Gastrocnemius medialis (tissue), 4 donors: ENCODE measurements at regions of chr14 and their contacts with region 1.

Region 1: DNA sequence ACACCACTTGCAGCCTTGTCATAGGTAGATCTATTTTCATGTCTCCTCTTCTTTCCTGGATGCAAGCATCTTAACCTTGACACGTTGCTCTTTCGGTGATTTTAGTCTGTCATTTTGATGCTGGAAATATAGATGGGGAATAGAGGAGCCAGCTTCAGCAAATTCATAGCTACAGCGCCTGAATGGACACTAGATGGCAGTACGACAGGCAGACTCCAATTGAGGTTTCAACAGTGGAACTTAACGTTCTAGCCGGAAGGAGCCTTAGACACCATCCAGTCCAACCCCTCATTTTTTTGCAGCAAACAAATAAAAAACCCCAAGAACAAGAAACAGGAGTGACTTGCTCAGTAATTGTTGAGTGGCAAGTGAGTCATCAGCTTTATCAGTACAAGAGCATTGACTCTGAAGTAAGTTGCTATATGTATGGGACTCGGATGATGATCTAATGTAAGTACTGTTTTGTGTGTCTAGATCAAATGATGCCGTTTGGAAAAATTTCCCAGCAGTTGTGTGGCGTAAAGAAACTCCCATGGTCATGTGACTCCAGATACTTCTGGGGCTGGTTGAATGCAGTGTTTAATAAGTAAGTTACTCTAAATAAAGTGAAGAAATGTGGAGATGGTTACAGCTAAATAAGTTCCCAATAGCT is 9.0 kb downstream of the DMAC2L start:
- DNase-seq: peak; percentile 44 to 51
- ATAC-seq: peak; percentile 96 to 99
- H3K4me3 ChIP-seq: peak overlapping the region; percentile 15 to 40 (median 28)
- H3K27ac ChIP-seq: peak overlapping the region; percentile 52 to 72 (median 63)
- H3K4me1 ChIP-seq: peaks cover 16 to 23% of the 10 kb centered on the region in 2 donors
- H3K27me3 ChIP-seq: no peaks in the 10 kb centered on the region
- CTCF ChIP-seq: peak; percentile 52 to 89 (median 77)
- POLR2A ChIP-seq: no peak

Region 2: DNA sequence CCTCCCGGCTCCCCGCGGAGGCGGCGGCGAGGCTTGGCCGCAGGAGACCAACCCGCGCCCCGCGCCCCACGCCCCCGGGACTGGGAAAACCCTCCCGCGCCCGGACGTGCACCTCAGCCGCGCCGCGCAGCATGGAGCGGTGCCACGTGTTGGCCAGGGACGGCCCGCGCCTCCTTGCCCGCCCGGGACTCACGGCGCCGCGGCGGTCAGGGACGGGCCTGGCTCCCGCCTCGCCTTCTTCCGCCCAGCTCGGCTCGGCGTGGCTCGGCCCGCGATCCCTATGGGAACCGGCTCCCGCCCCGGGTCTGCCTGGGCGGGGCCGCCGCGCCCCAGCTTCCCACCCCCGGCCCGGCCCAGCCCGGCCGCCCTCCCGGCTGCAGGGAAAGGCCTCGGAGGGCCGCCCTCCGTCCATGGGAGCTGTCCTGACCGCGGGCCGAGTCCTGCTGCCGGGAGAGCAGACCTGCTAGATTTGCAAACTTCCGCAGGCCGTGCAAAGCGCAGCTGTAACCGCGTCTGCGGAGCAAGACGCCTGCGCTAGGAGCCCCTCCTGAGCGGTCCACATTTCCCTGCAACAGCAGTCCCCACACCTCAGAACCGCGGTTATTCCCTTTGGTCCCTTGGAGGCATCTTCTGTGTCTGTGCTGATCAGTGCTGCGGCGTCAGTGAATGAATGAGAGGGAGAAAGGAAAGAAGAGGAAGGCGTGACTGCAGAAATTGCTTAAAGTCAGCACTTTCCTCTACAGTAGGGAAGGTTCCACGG is 75.7 kb after region 1 on chr14 and contains the start of gene CDKL1:
- in situ Hi-C with region 1: loop called in 1 of 4 experiments (anchors 5 kb)
- intact Hi-C with region 1: loop called (anchors 2 kb)
- DNase-seq: peak; percentile 9 to 27
- ATAC-seq: peak; percentile 74 to 75
- H3K4me3 ChIP-seq: peak within 1 kb of the TSS; percentile 59 to 95 (median 67)
- H3K27ac ChIP-seq: peak within 1 kb of the TSS; percentile 66 to 70 (median 68)
- H3K4me1 ChIP-seq: peaks cover 10 to 13% of the 10 kb centered on the region in 2 donors
- H3K27me3 ChIP-seq: no peaks in the 10 kb centered on the region
- CTCF ChIP-seq: no peak
- POLR2A ChIP-seq: peak in 1 of 2 donors; percentile 13
- total RNA-seq, gene CDKL1: 0.59 to 2.0 (median 1.4) TPM

Region 3: DNA sequence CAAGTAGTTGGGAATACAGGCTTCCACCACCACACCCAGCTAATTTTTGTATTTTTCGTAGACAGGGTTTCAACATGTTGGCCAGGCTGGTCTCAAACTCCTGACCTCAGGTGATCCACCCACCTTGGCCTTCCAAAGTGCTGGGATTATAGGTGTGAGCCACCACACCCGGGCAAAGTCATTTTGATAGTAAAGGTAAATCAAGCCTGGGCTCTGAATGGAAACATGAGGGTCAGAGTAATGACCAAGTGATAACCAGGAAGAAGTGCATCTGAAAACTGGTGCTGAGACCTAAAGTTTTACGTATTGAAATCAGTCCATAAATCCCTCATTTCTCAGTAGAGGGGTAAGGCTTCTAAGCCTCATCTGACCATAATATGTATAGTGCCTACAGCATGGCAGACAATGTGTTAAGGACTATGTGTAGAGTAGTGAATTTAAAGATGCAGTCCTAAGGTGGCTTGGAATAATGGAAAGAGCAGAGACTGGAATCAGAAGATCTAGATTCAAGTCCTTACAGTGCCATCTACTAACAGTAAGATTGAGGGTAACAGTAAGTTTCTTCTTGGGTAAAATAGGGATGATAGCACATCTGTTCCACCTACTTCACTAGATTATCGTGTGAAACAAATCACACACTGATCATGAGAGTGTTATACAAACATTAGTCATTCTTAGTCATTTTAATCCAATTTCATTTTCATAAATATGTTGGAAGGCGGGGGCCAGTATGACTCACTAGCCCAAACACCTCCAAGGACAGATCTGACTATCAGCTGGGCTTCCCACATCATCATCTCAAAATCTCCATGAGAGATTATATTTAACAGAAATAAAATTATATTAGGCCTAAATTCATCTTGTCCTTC is 200.0 kb after region 1 on chr14:
- in situ Hi-C with region 1: loop called in 2 of 4 experiments (anchors 5 to 10 kb)
- intact Hi-C with region 1: no loop called
- DNase-seq: no peak
- ATAC-seq: peak in 1 of 2 donors; percentile 66
- H3K4me3 ChIP-seq: no peak overlapping the region
- H3K27ac ChIP-seq: peak overlapping the region in 2 of 4 donors; percentile 33 to 36
- H3K4me1 ChIP-seq: peaks cover 0 to 4% of the 10 kb centered on the region in 2 donors
- H3K27me3 ChIP-seq: no peaks in the 10 kb centered on the region
- CTCF ChIP-seq: no peak
- POLR2A ChIP-seq: no peak

Region 4: GRCh38 chr14:50778721-50779483 is 457.8 kb after region 1 on chr14:
- in situ Hi-C with region 1: loop called in 2 of 4 experiments (anchors 25 kb)
- intact Hi-C with region 1: loop called (anchors 2 kb)
- DNase-seq: no peak
- ATAC-seq: no peak
- H3K4me3 ChIP-seq: no peak overlapping the region
- H3K27ac ChIP-seq: peak overlapping the region; percentile 66 to 79 (median 74)
- H3K4me1 ChIP-seq: peaks cover 17 to 38% of the 10 kb centered on the region in 2 donors
- H3K27me3 ChIP-seq: no peaks in the 10 kb centered on the region
- CTCF ChIP-seq: no peak
- POLR2A ChIP-seq: no peak